ENCODE measurements at regions of chr17 and their contacts with region 1.

Region 1: DNA sequence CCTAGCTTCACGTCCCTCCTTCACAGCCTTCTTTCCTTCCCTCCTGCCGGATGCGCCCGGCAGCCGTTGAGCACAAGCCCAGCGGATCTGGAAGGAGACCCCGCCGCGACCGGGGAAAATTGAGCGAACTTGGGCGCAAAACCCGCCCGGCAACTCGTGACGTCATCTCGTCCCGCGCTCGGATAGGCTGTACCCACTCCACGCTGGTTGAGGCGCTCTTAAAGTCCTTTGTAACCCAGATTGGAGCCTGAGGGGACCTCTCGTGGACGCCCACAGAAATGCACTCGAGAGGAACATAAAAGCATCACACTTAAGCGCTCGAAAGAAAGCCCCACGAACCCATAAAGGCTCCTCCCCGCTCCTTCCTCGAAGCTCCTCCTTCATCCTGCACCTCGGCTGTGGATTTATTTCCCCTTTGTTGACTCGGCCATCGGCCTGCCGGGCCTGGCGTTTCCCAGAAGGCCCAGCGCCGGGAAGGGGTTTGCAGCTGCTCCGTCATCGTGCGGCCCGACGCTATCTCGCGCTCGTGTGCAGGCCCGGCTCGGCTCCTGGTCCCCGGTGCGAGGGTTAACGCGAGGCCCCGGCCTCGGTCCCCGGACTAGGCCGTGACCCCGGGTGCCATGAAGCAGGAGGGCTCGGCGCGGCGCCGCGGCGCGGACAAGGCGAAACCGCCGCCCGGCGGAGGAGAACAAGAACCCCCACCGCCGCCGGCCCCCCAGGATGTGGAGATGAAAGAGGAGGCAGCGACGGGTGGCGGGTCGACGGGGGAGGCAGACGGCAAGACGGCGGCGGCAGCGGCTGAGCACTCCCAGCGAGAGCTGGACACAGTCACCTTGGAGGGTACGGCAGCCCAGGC is at the start of gene PSMD3:
- H3K4me3 Mint-ChIP-seq: peak within 1 kb of the TSS; percentile 90
- H3K27ac Mint-ChIP-seq: peak within 1 kb of the TSS; percentile 99
- H3K4me1 Mint-ChIP-seq: peaks cover 30% of the 10 kb centered on the region
- H3K27me3 Mint-ChIP-seq: peaks cover 3% of the 10 kb centered on the region

Region 2: GRCh38 chr17:39605492-39606433 is 374.8 kb before region 1 on chr17:
- intact Hi-C with region 1: no loop called
- H3K4me3 Mint-ChIP-seq: no peak overlapping the region
- H3K27ac Mint-ChIP-seq: no peak overlapping the region
- H3K4me1 Mint-ChIP-seq: peaks cover 36% of the 10 kb centered on the region
- H3K27me3 Mint-ChIP-seq: peaks cover 96% of the 10 kb centered on the region

Region 3: DNA sequence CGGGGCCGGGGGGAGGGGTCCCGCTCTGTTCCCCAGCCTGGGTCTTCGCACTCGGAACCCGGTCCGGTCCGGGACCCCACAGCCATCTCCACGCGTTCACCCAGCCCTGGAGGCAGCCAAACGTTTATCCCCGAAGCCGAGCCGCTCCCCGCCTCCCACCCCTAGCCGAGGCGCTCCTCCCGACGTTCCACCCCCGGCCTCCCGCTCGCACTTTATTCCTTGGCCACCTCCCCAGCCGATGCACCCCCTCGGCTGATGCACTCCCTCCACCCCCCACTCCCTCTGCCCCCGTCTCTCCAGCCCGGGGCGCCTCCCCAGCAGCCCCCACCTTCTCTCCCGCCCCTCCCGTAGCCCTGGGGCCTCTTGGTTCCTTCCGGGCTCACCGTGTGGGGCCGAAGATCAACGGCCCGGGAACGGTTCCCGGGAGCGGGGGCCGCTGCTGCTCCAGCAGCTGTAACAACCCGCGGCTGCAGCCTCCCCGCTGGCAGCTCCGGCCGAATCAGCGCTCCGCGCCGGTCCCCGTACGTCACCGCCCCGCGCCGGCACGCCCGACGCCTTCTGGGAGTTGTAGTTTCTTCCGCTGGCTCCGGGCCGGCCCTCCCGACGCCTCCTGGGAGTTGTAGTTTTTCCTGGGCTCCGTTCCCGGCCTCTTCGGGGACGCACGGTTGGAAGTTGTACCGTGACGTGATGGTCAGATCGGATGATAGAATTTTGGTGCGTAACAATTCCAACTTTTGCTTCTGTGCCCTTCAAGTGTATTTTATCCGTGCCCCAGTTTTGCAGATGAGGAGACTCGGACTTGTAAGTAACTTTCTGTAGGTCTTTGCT is 53.3 kb before region 1 on chr17 and contains the starts of genes LRRC3C and ORMDL3:
- intact Hi-C with region 1: loop called (anchors 1 kb)
- H3K4me3 Mint-ChIP-seq: peak within 1 kb of the TSS; percentile 77
- H3K27ac Mint-ChIP-seq: peak within 1 kb of the TSS; percentile 82
- H3K4me1 Mint-ChIP-seq: peaks cover 65% of the 10 kb centered on the region
- H3K27me3 Mint-ChIP-seq: no peaks in the 10 kb centered on the region

Region 4: GRCh38 chr17:39952680-39953470 is 27.7 kb before region 1 on chr17:
- intact Hi-C with region 1: loop called (anchors 1 kb)
- H3K4me3 Mint-ChIP-seq: peak overlapping the region; percentile 72
- H3K27ac Mint-ChIP-seq: peak overlapping the region; percentile 85
- H3K4me1 Mint-ChIP-seq: peaks cover 58% of the 10 kb centered on the region
- H3K27me3 Mint-ChIP-seq: peaks cover 24% of the 10 kb centered on the region

Region 5: GRCh38 chr17:39963829-39964228 is 16.8 kb before region 1 on chr17:
- intact Hi-C with region 1: loop called (anchors 1 kb)
- H3K4me3 Mint-ChIP-seq: no peak overlapping the region
- H3K27ac Mint-ChIP-seq: peak overlapping the region; percentile 10
- H3K4me1 Mint-ChIP-seq: peaks cover 72% of the 10 kb centered on the region
- H3K27me3 Mint-ChIP-seq: peaks cover 8% of the 10 kb centered on the region